ENCODE measurements at regions of chr6 and their contacts with region 1.

Region 1: GRCh38 chr6:43629505-43630300 is 639 bp upstream of the GTPBP2 start:
- DNase-seq: peak; percentile 86 to 98
- H3K4me3 ChIP-seq: peak overlapping the region; percentile 97 to 99
- H3K27ac ChIP-seq: peak overlapping the region; percentile 97 to 98
- H3K4me1 ChIP-seq: peaks cover 5 to 19% of the 10 kb centered on the region in 2 donors
- H3K27me3 ChIP-seq: no peaks in the 10 kb centered on the region
- CTCF ChIP-seq: no peak

Region 2: GRCh38 chr6:43516697-43517504 is 112.8 kb before region 1 on chr6 and contains the starts of genes POLR1C and YIPF3:
- intact Hi-C with region 1: loop called (anchors 2 kb)
- DNase-seq: peak; percentile 89 to 98
- H3K4me3 ChIP-seq: peak within 1 kb of the TSS; percentile 81 to 95
- H3K27ac ChIP-seq: peak within 1 kb of the TSS; percentile 82 to 87
- H3K4me1 ChIP-seq: peaks cover 11 to 24% of the 10 kb centered on the region in 2 donors
- H3K27me3 ChIP-seq: no peaks in the 10 kb centered on the region
- CTCF ChIP-seq: no peak
- total RNA-seq, gene POLR1C: 51.5 TPM
- total RNA-seq, gene YIPF3: 71.4 TPM

Region 3: GRCh38 chr6:43702534-43703440 is 73.1 kb after region 1 on chr6:
- intact Hi-C with region 1: loop called (anchors 5 kb)
- DNase-seq: peak; percentile 80 to 96
- H3K4me3 ChIP-seq: no peak overlapping the region
- H3K27ac ChIP-seq: peak overlapping the region; percentile 78 to 85
- H3K4me1 ChIP-seq: peaks cover 5 to 19% of the 10 kb centered on the region in 2 donors
- H3K27me3 ChIP-seq: no peaks in the 10 kb centered on the region
- CTCF ChIP-seq: no peak

Region 4: GRCh38 chr6:44127186-44128019 is 497.7 kb after region 1 on chr6 and contains the starts of genes MRPL14 and TMEM63B:
- intact Hi-C with region 1: loop called (anchors 5 kb)
- DNase-seq: peak; percentile 43 to 91
- H3K4me3 ChIP-seq: peak within 1 kb of the TSS; percentile 85 to 86
- H3K27ac ChIP-seq: peak within 1 kb of the TSS; percentile 81 to 84
- H3K4me1 ChIP-seq: peaks cover 0 to 23% of the 10 kb centered on the region in 2 donors
- H3K27me3 ChIP-seq: no peaks in the 10 kb centered on the region
- CTCF ChIP-seq: no peak
- total RNA-seq, gene MRPL14: 61.8 TPM
- total RNA-seq, gene TMEM63B: 9.6 TPM

Region 5: GRCh38 chr6:44387346-44388133 is 757.8 kb after region 1 on chr6 and contains the start of gene CDC5L:
- intact Hi-C with region 1: loop called (anchors 5 kb)
- DNase-seq: peak; percentile 91 to 99
- H3K4me3 ChIP-seq: peak within 1 kb of the TSS; percentile 70 to 94
- H3K27ac ChIP-seq: peak within 1 kb of the TSS; percentile 89 to 91
- H3K4me1 ChIP-seq: peaks cover 0 to 17% of the 10 kb centered on the region in 2 donors
- H3K27me3 ChIP-seq: no peaks in the 10 kb centered on the region
- CTCF ChIP-seq: no peak
- total RNA-seq, gene CDC5L: 10.9 TPM